MCF 10A (cell line): ENCODE measurements at regions of chr19 and their contacts with region 1.

Region 1: GRCh38 chr19:52734893-52735661 is at the start of gene ZNF611:
- DNase-seq: peak; percentile 97
- H3K4me3 Mint-ChIP-seq: peak within 1 kb of the TSS; percentile 73
- H3K27ac Mint-ChIP-seq: peak within 1 kb of the TSS; percentile 92
- H3K4me1 Mint-ChIP-seq: peaks cover 11% of the 10 kb centered on the region
- H3K27me3 Mint-ChIP-seq: no peaks in the 10 kb centered on the region
- CTCF ChIP-seq: peak; percentile 52
- total RNA-seq, gene ZNF611: 12.6 and 23.1 TPM in 2 replicates

Region 2: DNA sequence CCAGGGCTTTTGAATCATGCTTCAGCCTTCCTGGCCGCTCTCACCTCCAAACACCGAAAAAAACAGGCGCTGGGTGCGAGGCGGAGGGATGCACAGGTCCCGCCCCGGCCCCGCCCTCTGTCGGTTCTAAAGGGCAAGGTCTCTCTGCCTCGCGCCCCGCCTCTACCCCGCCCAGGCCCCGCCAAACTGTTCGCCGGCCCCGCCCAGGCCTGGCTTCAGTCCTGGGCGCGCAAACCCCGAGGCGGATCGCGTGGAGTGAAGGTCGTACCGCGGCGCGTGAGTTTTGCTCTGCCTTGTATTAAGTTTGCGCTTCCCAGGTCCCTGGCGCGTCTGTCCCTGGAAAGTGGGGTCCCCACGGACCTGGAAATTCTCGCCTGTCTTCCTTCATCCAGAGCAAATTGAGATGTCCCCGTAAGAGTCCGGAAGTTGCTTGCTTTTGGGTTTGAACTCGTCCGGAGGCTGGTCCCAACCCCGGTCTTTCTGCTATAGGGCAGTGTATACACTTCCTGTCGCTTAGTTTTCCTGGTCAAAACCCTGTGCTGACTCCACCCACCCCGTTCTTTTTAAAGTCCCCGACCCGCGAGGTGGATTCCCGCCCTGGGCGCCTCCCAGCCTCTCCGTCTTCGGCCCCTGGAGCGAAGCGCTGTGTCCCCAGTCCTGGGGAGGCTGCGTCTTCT is 199.2 kb before region 1 on chr19:
- CTCF ChIA-PET with region 1: no interaction called
- POLR2A ChIA-PET with region 1: no interaction called
- intact Hi-C with region 1: loop called (anchors 10 kb)
- DNase-seq: peak; percentile 91
- H3K4me3 Mint-ChIP-seq: peak overlapping the region; percentile 82
- H3K27ac Mint-ChIP-seq: peak overlapping the region; percentile 73
- H3K4me1 Mint-ChIP-seq: peaks cover 7% of the 10 kb centered on the region
- H3K27me3 Mint-ChIP-seq: no peaks in the 10 kb centered on the region
- CTCF ChIP-seq: no peak

Region 3: GRCh38 chr19:52601025-52601973 is 133.8 kb before region 1 on chr19:
- CTCF ChIA-PET with region 1: no interaction called
- POLR2A ChIA-PET with region 1: interaction called, 3 read pairs
- intact Hi-C with region 1: loop called (anchors 1 kb)
- DNase-seq: peak; percentile 93
- H3K4me3 Mint-ChIP-seq: peak overlapping the region; percentile 83
- H3K27ac Mint-ChIP-seq: peak overlapping the region; percentile 73
- H3K4me1 Mint-ChIP-seq: peaks cover 11% of the 10 kb centered on the region
- H3K27me3 Mint-ChIP-seq: no peaks in the 10 kb centered on the region
- CTCF ChIP-seq: peak; percentile 34

Region 4: DNA sequence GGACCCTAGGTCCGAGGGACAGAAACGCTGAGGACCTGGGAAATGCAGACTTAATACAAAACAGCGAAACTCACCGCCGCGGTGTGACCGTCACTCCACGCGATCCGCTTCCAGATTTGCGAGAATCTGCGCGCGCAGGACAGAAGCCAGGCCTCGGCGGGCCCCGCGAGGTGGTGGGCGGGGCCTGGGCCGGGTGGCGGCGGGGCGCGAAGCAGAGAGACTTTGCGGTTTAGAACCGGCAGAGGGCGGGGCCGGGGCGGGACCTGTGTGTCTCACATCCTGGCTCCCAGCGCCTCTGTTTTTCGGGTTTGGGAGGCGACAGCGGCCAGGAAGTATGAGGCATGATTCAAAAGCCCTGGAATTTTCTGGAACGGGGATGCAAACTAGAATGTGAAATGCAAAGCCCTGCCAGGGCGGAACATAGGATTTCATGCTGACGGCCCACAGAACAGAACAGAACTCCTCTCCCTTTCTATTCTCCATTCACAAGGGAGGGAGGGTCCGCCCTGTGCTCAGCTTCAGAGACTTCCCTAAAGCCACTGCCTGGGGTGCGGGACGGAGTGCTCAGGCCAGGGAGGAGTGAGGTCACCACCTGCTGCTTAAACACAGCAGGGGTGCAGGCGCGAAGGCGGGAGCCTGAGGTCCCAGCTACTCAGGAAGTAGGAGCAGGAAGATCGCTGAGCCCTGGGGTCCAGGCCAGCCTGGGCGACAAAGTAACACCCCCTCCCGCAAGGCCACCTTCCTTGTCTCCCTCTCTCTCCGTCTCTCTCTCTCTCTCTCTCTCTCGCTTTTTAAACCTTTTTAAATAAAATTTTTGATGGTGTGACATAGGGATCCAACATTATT is 44.5 kb before region 1 on chr19:
- CTCF ChIA-PET with region 1: no interaction called
- POLR2A ChIA-PET with region 1: interaction called, 9 read pairs
- intact Hi-C with region 1: loop called (anchors 5 kb)
- DNase-seq: peak; percentile 97
- H3K4me3 Mint-ChIP-seq: peak overlapping the region; percentile 97
- H3K27ac Mint-ChIP-seq: peak overlapping the region; percentile 90
- H3K4me1 Mint-ChIP-seq: peaks cover 25% of the 10 kb centered on the region
- H3K27me3 Mint-ChIP-seq: no peaks in the 10 kb centered on the region
- CTCF ChIP-seq: no peak

Region 5: GRCh38 chr19:52922841-52923777 is 188.0 kb after region 1 on chr19 and contains the start of gene ZNF888:
- CTCF ChIA-PET with region 1: no interaction called
- POLR2A ChIA-PET with region 1: interaction called, 3 read pairs
- intact Hi-C with region 1: loop called (anchors 2 kb)
- DNase-seq: peak; percentile 94
- H3K4me3 Mint-ChIP-seq: peak within 1 kb of the TSS; percentile 92
- H3K27ac Mint-ChIP-seq: peak within 1 kb of the TSS; percentile 83
- H3K4me1 Mint-ChIP-seq: peaks cover 37% of the 10 kb centered on the region
- H3K27me3 Mint-ChIP-seq: no peaks in the 10 kb centered on the region
- CTCF ChIP-seq: no peak
- total RNA-seq, gene ZNF888: 7.0 and 7.3 TPM in 2 replicates

Region 6: GRCh38 chr19:53333463-53334449 is 598.7 kb after region 1 on chr19 and contains the start of gene ZNF845:
- CTCF ChIA-PET with region 1: no interaction called
- POLR2A ChIA-PET with region 1: no interaction called
- intact Hi-C with region 1: loop called (anchors 1 kb)
- DNase-seq: peak; percentile 96
- H3K4me3 Mint-ChIP-seq: peak within 1 kb of the TSS; percentile 86
- H3K27ac Mint-ChIP-seq: peak within 1 kb of the TSS; percentile 84
- H3K4me1 Mint-ChIP-seq: peaks cover 7% of the 10 kb centered on the region
- H3K27me3 Mint-ChIP-seq: no peaks in the 10 kb centered on the region
- CTCF ChIP-seq: no peak
- total RNA-seq, gene ZNF845: 3.8 and 5.7 TPM in 2 replicates